H1 (cell line): ENCODE measurements at regions of chr19 and their contacts with region 1.

Region 1: GRCh38 chr19:44988896-44989556 is 12.2 kb upstream of the RELB start:
- DNase-seq: peak in 1 of 2 experiments; percentile 87
- H3K4me3 ChIP-seq: no peak overlapping the region
- H3K27ac ChIP-seq: no peak overlapping the region
- H3K4me1 ChIP-seq: no peaks in the 10 kb centered on the region
- H3K27me3 ChIP-seq: no peaks in the 10 kb centered on the region
- CTCF ChIP-seq: peak; percentile 81 to 95 (median 89)
- EP300 ChIP-seq: no peak
- POLR2A ChIP-seq: no peak
- RAD21 ChIP-seq: peak; percentile 59 to 69; a peak in 3 of 4 replicates

Region 2: DNA sequence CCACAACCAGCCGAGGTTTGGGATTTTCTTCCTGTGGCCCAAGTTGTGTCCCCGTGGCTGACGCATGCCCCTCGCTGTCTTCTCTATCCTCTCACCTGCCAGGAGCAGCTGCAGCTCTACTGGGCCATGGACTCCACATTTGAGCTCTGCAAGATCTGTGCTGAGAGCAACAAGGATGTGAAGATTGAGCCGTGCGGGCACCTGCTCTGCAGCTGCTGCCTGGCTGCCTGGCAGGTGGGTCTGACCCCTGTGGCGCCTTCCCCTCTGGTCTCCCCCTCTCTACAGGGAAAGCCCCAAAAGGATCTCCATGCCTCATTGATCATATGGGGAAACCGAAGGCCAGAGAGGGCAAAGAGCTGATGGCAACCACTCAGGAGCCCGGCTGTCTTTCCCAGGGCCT is 196.7 kb before region 1 on chr19:
- CTCF ChIA-PET with region 1: no interaction called
- POLR2A ChIA-PET with region 1: no interaction called
- DNase-seq: no peak
- H3K4me3 ChIP-seq: no peak overlapping the region
- H3K27ac ChIP-seq: no peak overlapping the region
- H3K4me1 ChIP-seq: peaks cover 2 to 5% (median 4%) of the 10 kb centered on the region in 4 experiments; a peak in 5 of 7 replicates
- H3K27me3 ChIP-seq: no peaks in the 10 kb centered on the region
- CTCF ChIP-seq: no peak
- EP300 ChIP-seq: no peak
- POLR2A ChIP-seq: no peak
- RAD21 ChIP-seq: no peak

Region 3: GRCh38 chr19:44972802-44973201 is 16.2 kb before region 1 on chr19:
- CTCF ChIA-PET with region 1: interaction called, 28 read pairs
- POLR2A ChIA-PET with region 1: interaction called, 4 read pairs
- DNase-seq: no peak
- H3K4me3 ChIP-seq: no peak overlapping the region
- H3K27ac ChIP-seq: no peak overlapping the region
- H3K4me1 ChIP-seq: no peaks in the 10 kb centered on the region
- H3K27me3 ChIP-seq: no peaks in the 10 kb centered on the region
- CTCF ChIP-seq: no peak
- EP300 ChIP-seq: no peak
- POLR2A ChIP-seq: no peak
- RAD21 ChIP-seq: no peak

Region 4: GRCh38 chr19:45001087-45001739 is 12.2 kb after region 1 on chr19 and contains the start of gene RELB:
- CTCF ChIA-PET with region 1: interaction called, 17 read pairs
- POLR2A ChIA-PET with region 1: interaction called, 11 read pairs
- DNase-seq: peak; percentile 47 to 99
- H3K4me3 ChIP-seq: peak within 1 kb of the TSS; percentile 67 to 96 (median 78)
- H3K27ac ChIP-seq: peak within 1 kb of the TSS; percentile 93
- H3K4me1 ChIP-seq: no peaks in the 10 kb centered on the region
- H3K27me3 ChIP-seq: no peaks in the 10 kb centered on the region
- CTCF ChIP-seq: no peak
- EP300 ChIP-seq: no peak
- POLR2A ChIP-seq: peak in 1 of 2 experiments; percentile 22; a peak in 1 of 3 replicates
- RAD21 ChIP-seq: no peak
- total RNA-seq, gene RELB: 12.5 and 13.1 TPM in 2 replicates

Region 5: GRCh38 chr19:45008552-45008951 is 19.5 kb after region 1 on chr19:
- CTCF ChIA-PET with region 1: interaction called, 10 read pairs
- POLR2A ChIA-PET with region 1: interaction called, 4 read pairs
- DNase-seq: no peak
- H3K4me3 ChIP-seq: no peak overlapping the region
- H3K27ac ChIP-seq: no peak overlapping the region
- H3K4me1 ChIP-seq: no peaks in the 10 kb centered on the region
- H3K27me3 ChIP-seq: no peaks in the 10 kb centered on the region
- CTCF ChIP-seq: no peak
- EP300 ChIP-seq: no peak
- POLR2A ChIP-seq: no peak
- RAD21 ChIP-seq: no peak

Region 6: DNA sequence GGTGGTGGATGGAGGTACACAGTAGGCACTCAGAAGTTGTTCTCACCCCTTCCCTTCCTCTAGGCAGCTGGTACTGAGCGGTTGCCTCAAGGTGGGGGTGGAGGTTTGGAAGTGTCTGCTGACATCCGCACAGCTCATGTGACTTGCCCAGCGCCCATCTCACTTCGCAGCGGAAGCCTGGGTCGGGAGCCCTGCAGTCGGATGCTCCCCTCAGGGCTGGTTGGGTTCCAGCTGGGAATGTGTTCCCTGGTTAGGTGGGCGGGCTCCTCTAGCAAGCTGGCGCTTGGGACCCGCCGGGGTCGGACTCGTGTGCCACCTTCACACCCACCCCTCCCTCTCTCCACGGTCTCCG is 114.1 kb after region 1 on chr19:
- CTCF ChIA-PET with region 1: no interaction called
- POLR2A ChIA-PET with region 1: no interaction called
- DNase-seq: no peak
- H3K4me3 ChIP-seq: no peak overlapping the region
- H3K27ac ChIP-seq: no peak overlapping the region
- H3K4me1 ChIP-seq: peaks cover 0 to 28% (median 11%) of the 10 kb centered on the region in 4 experiments; a peak in 6 of 7 replicates
- H3K27me3 ChIP-seq: no peaks in the 10 kb centered on the region
- CTCF ChIP-seq: no peak
- EP300 ChIP-seq: no peak
- POLR2A ChIP-seq: no peak
- RAD21 ChIP-seq: no peak